ENCODE measurements at regions of chr11 and their contacts with region 1.

Region 1: GRCh38 chr11:63567044-63567840 is 4.1 kb upstream of the PLAAT2 start:
- DNase-seq: peak; percentile 58 to 87 (median 69)
- H3K4me3 ChIP-seq: peak overlapping the region; percentile 3
- H3K4me3 Mint-ChIP-seq: peak overlapping the region; percentile 1 to 79 (median 65)
- H3K27ac ChIP-seq: peak overlapping the region; percentile 92
- H3K27ac Mint-ChIP-seq: peak overlapping the region; percentile 81 to 99 (median 97)
- H3K4me1 ChIP-seq: peaks cover 32% of the 10 kb centered on the region
- H3K4me1 Mint-ChIP-seq: peaks cover 32 to 54% (median 51%) of the 10 kb centered on the region in 3 donors
- H3K27me3 ChIP-seq: no peaks in the 10 kb centered on the region
- H3K27me3 Mint-ChIP-seq: peaks cover 0 to 2% of the 10 kb centered on the region in 2 donors

Region 2: DNA sequence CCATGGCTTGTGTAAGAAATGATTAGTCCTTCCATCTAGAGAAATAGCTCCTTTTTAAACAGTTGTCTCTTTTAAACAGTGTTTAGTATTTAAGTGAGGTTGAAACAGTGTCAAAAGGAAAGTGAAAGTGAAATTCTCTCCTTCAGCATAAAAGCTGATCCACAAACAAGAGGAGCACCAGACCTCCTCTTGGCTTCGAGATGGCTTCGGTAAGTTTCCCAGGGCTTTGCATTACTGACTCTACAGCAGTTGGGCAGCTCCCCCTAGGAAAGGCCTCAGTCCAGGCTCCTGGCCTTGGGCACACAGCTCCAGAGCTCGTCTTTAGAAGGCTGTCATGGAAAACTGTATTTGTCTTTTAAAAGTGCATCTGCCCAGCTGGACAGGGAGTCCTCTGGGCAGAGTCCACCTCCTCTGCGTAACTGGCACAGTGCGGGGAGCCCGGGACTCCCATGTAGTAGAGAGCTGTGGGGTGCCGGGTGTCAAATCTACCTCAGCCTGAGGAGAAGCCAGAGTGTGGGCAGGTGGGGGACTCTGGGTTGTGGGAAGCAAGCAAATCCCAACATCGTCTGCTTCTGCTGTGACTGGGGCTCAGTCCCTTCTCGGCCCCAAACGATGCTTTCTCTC is 30.5 kb before region 1 on chr11 and contains the start of gene PLAAT4:
- CTCF ChIA-PET with region 1: no interaction called
- POLR2A ChIA-PET with region 1: interaction called, 11 read pairs
- DNase-seq: peak in 4 of 5 donors; percentile 31 to 57 (median 54)
- H3K4me3 ChIP-seq: peak within 1 kb of the TSS; percentile 78
- H3K4me3 Mint-ChIP-seq: peak within 1 kb of the TSS; percentile 91 to 99 (median 98)
- H3K27ac ChIP-seq: peak within 1 kb of the TSS; percentile 69
- H3K27ac Mint-ChIP-seq: peak within 1 kb of the TSS; percentile 90 to 100 (median 98)
- H3K4me1 ChIP-seq: peaks cover 82% of the 10 kb centered on the region
- H3K4me1 Mint-ChIP-seq: peaks cover 85 to 95% (median 92%) of the 10 kb centered on the region in 3 donors
- H3K27me3 ChIP-seq: no peaks in the 10 kb centered on the region
- H3K27me3 Mint-ChIP-seq: peaks cover 0 to 3% of the 10 kb centered on the region in 2 donors
- total RNA-seq, gene PLAAT4: 20.5 to 21.8 TPM

Measured in CD8-positive, alpha-beta memory T cell (primary cell).